H1 (cell line): ENCODE measurements at regions of chr20 and their contacts with region 1.

Region 1: DNA sequence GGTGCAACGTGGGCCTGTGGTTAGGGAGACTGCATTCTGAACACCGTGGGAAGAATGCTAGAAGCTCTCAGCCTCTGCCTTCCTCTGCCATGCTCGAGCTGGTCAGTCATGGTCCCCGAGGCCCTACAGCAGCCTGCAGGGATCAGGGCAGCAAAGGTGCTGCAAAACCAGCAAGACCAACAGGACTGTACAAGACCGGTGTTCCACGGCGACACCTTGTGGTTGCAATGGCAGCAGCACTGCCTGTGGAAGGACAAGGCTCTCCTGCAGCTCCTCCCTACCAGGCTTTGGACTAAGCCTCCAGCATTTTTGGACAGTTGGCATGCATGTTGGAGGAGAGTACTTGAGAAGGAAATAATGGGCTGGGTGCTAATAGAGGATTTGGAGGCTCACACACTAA is 18.8 kb upstream of the MYT1 start:
- DNase-seq: peak in 1 of 2 experiments; percentile 78
- H3K4me3 ChIP-seq: no peak overlapping the region
- H3K27ac ChIP-seq: no peak overlapping the region
- H3K4me1 ChIP-seq: peaks cover 0 to 8% (median 0%) of the 10 kb centered on the region in 4 experiments; a peak in 1 of 7 replicates
- H3K27me3 ChIP-seq: no peaks in the 10 kb centered on the region
- CTCF ChIP-seq: peak; percentile 65 to 89 (median 85)
- EP300 ChIP-seq: no peak
- POLR2A ChIP-seq: no peak
- RAD21 ChIP-seq: peak; percentile 35 to 49

Region 2: DNA sequence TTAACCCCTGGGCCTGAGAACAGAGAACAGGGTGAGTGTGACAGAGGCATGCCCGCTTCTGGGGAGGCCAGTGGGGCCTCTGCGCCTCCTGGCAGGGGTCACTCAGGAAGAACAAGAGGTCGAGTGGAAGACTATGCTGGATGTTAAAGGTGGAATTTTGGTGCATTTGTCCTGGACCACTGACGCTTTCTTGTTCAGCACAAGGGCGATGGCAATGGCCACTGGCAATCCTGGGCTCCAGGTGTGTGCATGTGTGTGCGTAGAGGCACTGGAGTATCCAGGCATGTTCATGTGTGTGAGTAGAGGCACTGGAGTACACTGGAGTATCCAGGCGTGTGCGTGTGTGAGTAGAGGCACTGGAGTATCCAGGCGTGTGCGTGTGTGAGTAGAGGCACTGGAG is 14.6 kb before region 1 on chr20:
- CTCF ChIA-PET with region 1: no interaction called
- POLR2A ChIA-PET with region 1: no interaction called
- DNase-seq: no peak
- H3K4me3 ChIP-seq: no peak overlapping the region
- H3K27ac ChIP-seq: no peak overlapping the region
- H3K4me1 ChIP-seq: no peaks in the 10 kb centered on the region; a peak in 1 of 7 replicates
- H3K27me3 ChIP-seq: no peaks in the 10 kb centered on the region
- CTCF ChIP-seq: no peak
- EP300 ChIP-seq: no peak
- POLR2A ChIP-seq: no peak
- RAD21 ChIP-seq: no peak

Region 3: DNA sequence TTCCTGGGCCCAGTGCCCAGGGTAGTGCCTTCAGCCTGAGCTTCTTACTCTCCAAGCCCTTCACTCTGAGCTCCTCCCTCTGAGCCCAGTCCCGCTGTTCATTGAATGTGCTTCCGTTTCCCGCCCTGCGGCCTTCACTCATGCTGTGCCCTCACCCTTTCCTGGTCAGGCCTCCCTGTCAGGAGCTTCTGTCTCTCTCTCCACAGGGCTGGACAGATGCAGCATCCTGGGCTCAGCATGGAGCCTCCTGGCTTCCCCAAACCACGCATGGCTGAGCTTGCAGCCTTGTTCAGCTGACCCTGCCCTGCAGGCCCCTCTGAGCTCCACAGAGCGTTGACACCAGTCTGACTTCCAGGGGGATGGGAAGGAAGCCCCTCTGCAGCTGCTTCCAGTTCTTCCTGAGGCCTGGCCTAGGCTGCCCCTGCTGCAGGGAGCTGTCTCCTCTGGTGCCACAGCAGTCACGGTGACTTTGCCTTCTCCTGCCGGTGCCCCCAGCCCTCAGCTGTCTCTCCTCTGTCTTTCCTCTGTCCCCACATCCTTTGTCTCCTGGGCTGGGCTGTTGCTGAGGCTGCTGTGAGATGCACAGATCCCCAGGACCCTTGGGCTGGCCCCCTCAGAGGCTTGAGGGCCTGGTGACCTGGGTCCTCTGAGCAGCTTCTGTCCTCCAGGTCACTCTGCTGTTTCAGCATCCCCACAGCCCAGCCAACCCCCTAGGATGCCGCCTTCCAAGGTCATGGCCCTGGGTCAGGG is 10.9 kb after region 1 on chr20:
- CTCF ChIA-PET with region 1: interaction called, 16 read pairs
- POLR2A ChIA-PET with region 1: interaction called, 5 read pairs
- DNase-seq: no peak
- H3K4me3 ChIP-seq: no peak overlapping the region
- H3K27ac ChIP-seq: no peak overlapping the region
- H3K4me1 ChIP-seq: peaks cover 0 to 33% (median 23%) of the 10 kb centered on the region in 4 experiments; a peak in 6 of 7 replicates
- H3K27me3 ChIP-seq: peaks cover 0 to 8% (median 7%) of the 10 kb centered on the region in 4 experiments; a peak in 5 of 7 replicates
- CTCF ChIP-seq: no peak
- EP300 ChIP-seq: no peak
- POLR2A ChIP-seq: no peak
- RAD21 ChIP-seq: no peak